ENCODE measurements at regions of chr11 and their contacts with region 1.

Region 1: GRCh38 chr11:73393479-73394380 is 17.5 kb downstream of the RELT start:
- DNase-seq: peak; percentile 73
- H3K4me3 ChIP-seq: no peak overlapping the region
- H3K27ac ChIP-seq: peak overlapping the region; percentile 46
- H3K4me1 ChIP-seq: peaks cover 12% of the 10 kb centered on the region
- H3K27me3 ChIP-seq: no peaks in the 10 kb centered on the region
- CTCF ChIP-seq: peak; percentile 78 to 89
- POLR2A ChIP-seq: no peak

Region 2: GRCh38 chr11:73242251-73243079 is 151.3 kb before region 1 on chr11:
- CTCF ChIA-PET with region 1: no interaction called
- POLR2A ChIA-PET with region 1: no interaction called
- dilution Hi-C with region 1: no loop called
- intact Hi-C with region 1: loop called (anchors 1 kb)
- DNase-seq: peak; percentile 84
- H3K4me3 ChIP-seq: no peak overlapping the region
- H3K27ac ChIP-seq: no peak overlapping the region
- H3K4me1 ChIP-seq: peaks cover 11% of the 10 kb centered on the region
- H3K27me3 ChIP-seq: no peaks in the 10 kb centered on the region
- CTCF ChIP-seq: peak; percentile 88 to 89
- POLR2A ChIP-seq: no peak

Region 3: GRCh38 chr11:73335204-73335923 is 58.4 kb before region 1 on chr11:
- CTCF ChIA-PET with region 1: interaction called, 29 read pairs
- POLR2A ChIA-PET with region 1: no interaction called
- dilution Hi-C with region 1: no loop called
- intact Hi-C with region 1: no loop called
- DNase-seq: peak; percentile 88
- H3K4me3 ChIP-seq: no peak overlapping the region
- H3K27ac ChIP-seq: peak overlapping the region; percentile 70
- H3K4me1 ChIP-seq: peaks cover 33% of the 10 kb centered on the region
- H3K27me3 ChIP-seq: no peaks in the 10 kb centered on the region
- CTCF ChIP-seq: peak; percentile 95 to 96
- POLR2A ChIP-seq: no peak

Region 4: DNA sequence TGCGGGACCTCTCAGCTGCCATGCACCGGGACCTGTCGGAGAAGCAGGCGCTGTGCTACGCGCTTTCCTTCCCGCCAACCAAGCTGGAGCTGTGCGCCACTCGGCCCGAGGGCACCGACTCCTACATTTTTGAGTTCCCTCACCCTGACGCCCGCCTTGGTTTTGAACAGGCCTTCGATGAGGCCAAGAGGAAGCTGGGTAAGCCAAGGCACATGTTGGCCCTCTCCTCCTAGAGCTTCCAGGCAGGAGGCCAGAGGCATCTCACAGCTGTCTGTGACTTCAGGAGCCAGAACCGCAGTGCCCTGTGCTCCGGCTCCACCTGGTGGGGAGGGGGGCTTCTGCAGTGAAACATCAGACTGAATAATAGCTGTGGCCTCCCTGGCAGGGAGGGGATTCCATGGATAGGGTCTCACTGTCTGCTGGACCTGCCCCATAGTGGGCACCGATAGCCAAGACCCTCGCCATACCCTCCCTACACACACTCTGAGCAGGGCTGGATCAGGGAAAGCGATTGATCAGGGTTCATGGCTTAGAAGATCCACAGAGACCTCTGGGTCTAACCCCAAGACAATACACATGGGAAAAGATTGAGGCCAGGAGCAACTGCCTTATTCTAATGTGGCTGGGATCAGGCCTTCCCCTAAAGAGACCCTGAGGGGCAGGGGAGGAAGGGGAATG is 33.3 kb before region 1 on chr11:
- CTCF ChIA-PET with region 1: interaction called, 31 read pairs
- POLR2A ChIA-PET with region 1: no interaction called
- dilution Hi-C with region 1: no loop called
- intact Hi-C with region 1: no loop called
- DNase-seq: peak; percentile 36
- H3K4me3 ChIP-seq: no peak overlapping the region
- H3K27ac ChIP-seq: no peak overlapping the region
- H3K4me1 ChIP-seq: no peaks in the 10 kb centered on the region
- H3K27me3 ChIP-seq: no peaks in the 10 kb centered on the region
- CTCF ChIP-seq: peak; percentile 36 to 60
- POLR2A ChIP-seq: no peak

Region 5: GRCh38 chr11:73493956-73494598 is 100.3 kb after region 1 on chr11:
- CTCF ChIA-PET with region 1: no interaction called
- POLR2A ChIA-PET with region 1: no interaction called
- dilution Hi-C with region 1: no loop called
- intact Hi-C with region 1: no loop called
- DNase-seq: peak; percentile 27
- H3K4me3 ChIP-seq: no peak overlapping the region
- H3K27ac ChIP-seq: no peak overlapping the region
- H3K4me1 ChIP-seq: no peaks in the 10 kb centered on the region
- H3K27me3 ChIP-seq: no peaks in the 10 kb centered on the region
- CTCF ChIP-seq: no peak
- POLR2A ChIP-seq: no peak

Region 6: DNA sequence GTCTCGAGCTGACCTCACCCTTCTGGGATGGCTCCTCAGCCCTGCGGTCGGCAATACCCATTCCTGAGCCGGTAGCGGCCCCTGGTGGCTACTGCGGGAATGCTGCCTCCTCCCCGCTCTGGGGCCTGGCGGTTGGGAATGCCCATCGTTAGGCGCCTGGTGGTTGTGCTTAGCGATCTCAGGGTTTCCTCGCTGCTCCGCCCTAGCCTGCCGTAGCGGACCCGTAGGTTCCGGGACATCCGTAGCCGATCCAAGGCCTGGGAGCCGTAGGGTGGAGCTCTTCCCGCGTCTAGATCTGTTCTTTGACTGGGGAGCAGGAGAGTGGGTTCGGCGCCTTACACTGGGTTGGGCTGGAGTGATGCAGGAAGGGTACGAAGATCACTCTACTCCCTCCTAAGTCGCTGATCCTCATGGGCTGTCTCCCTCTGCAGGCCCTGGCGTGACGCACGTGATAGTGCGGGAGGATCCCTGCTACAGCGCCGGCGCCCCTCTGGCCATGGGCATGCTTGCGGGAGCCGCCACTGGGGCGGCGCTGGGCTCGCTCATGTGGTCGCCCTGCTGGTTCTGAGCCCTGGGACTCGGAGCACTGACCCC is 267.4 kb after region 1 on chr11:
- CTCF ChIA-PET with region 1: interaction called, 89 read pairs
- POLR2A ChIA-PET with region 1: no interaction called
- dilution Hi-C with region 1: no loop called
- intact Hi-C with region 1: no loop called
- DNase-seq: peak; percentile 84
- H3K4me3 ChIP-seq: peak overlapping the region in 2 of 3 experiments; percentile 26 to 32
- H3K27ac ChIP-seq: no peak overlapping the region
- H3K4me1 ChIP-seq: peaks cover 6% of the 10 kb centered on the region
- H3K27me3 ChIP-seq: no peaks in the 10 kb centered on the region
- CTCF ChIP-seq: peak; percentile 96 to 98
- POLR2A ChIP-seq: no peak

Measured in endothelial cell of umbilical vein (primary cell).